ENCODE measurements at regions of chr1 and their contacts with region 1.

Region 1: DNA sequence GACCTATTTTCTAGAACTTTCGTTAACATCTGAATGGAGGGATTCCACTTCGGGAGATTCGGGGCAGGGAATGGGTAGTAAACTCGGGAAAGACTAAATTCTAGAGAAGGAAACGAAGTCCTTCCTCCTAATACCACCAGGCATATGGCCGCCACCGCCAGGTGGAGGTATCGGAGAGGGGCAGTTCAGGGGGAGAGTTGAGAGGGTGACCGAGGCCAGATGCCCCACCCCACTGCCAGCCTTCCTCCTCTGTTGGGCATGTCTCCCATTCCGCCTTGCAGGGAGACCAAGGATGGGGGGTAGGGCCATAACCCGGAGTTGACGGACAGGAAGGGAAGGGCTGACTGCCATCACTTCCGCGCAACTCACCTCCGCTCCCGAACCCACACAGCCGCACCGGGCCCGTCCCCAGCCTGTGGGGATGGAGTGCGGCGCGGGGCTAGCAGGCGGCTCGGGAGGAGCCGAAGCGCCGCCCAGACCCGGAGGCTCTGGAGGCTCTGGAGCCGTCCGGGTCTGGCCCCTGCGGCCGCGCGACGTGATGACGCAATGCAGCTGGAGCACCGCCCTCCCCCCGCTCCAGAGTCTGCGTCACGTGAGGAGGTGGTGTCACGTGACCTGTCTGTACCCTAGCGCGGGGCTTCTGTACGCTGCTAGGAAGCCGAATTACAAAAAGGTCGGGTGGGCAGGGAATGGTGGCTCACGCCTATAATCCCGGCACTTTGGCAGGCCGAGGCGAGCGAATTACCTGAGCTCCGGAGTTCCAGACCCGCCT is at the start of gene KLHL12:
- DNase-seq: peak; percentile 99
- H3K4me3 Mint-ChIP-seq: peak within 1 kb of the TSS; percentile 93
- H3K27ac Mint-ChIP-seq: peak within 1 kb of the TSS; percentile 97
- H3K4me1 Mint-ChIP-seq: no peaks in the 10 kb centered on the region
- H3K27me3 Mint-ChIP-seq: no peaks in the 10 kb centered on the region
- CTCF ChIP-seq: peak; percentile 87
- total RNA-seq, gene KLHL12: 35.4 and 36.7 TPM in 2 replicates

Region 2: DNA sequence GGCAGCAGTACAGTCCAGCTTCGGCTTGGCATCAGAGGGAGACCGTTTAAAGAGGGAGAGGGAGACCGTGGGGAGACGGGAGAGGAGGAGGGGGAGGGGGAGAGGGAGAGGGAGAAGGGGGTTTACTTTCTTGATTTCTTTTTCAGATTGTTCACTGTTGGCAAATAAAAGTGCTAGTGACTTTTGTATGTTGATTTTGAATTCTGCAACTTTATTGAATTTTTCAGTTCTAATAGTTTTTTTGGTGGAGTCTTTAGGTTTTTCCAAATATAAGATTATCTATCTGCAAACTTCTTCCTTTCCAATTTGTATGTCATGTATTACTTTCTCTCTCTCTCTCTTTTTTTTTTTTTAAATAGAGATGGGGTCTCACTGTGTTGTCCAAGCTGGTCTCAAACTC is 474.4 kb before region 1 on chr1:
- CTCF ChIA-PET with region 1: interaction called, 11 read pairs
- intact Hi-C with region 1: no loop called
- DNase-seq: no peak
- H3K4me3 Mint-ChIP-seq: no peak overlapping the region
- H3K27ac Mint-ChIP-seq: no peak overlapping the region
- H3K4me1 Mint-ChIP-seq: peaks cover 38% of the 10 kb centered on the region
- H3K27me3 Mint-ChIP-seq: no peaks in the 10 kb centered on the region
- CTCF ChIP-seq: no peak

Region 3: DNA sequence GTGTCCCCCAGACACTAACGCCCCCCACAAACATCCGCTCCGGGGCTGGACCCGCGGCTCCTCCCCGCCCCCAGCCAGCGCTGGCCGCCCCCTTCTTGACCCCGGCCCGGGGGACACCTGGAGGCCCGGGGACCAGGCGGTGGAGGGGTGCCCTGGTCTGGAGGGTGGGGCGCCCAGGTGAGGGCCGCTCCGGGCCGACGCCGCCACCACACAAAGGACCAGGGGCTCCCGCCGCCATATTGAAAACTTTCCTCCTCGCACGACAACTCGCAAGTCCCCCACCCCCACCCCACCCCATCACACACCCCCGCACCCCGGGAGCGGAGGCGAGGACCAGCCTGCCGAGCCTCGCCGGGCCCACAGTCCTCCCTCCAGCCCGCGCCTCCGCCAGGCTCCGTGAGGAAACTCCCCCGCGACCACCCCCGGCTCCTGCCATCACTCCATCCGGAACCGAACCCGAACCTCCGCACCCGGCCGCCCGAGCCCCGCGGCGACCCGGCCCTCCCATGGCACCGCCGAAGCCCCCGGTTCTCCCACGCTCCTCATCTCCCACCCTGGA is 119.5 kb before region 1 on chr1:
- CTCF ChIA-PET with region 1: no interaction called
- intact Hi-C with region 1: no loop called
- DNase-seq: peak; percentile 59
- H3K4me3 Mint-ChIP-seq: peak overlapping the region; percentile 82
- H3K27ac Mint-ChIP-seq: peak overlapping the region; percentile 80
- H3K4me1 Mint-ChIP-seq: peaks cover 55% of the 10 kb centered on the region
- H3K27me3 Mint-ChIP-seq: no peaks in the 10 kb centered on the region
- CTCF ChIP-seq: no peak

Region 4: DNA sequence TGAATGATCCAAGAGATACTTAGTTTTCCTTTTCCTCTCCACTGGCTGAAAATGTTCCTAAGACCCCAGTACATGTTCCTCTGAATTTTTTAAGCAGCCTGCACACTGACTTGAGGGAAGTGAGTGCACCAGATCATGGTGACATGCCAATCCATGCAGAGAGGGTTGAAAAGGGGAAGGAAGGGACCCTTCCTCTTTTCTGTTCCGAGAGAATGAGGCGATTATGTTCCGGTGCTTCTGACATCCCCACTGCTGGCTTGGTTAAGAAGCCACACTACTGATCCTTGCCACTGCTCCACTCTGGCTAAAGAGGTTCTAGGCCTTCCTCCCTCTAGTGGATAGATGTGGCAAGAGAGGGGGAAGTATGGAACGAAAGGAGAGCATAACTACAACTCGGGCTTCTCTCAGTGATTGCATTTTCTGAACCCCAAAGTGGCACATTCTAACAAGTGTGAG is 42.0 kb after region 1 on chr1:
- CTCF ChIA-PET with region 1: interaction called, 10 read pairs
- intact Hi-C with region 1: loop called (anchors 2 kb)
- DNase-seq: peak; percentile 68
- H3K4me3 Mint-ChIP-seq: no peak overlapping the region
- H3K27ac Mint-ChIP-seq: no peak overlapping the region
- H3K4me1 Mint-ChIP-seq: peaks cover 14% of the 10 kb centered on the region
- H3K27me3 Mint-ChIP-seq: peaks cover 28% of the 10 kb centered on the region
- CTCF ChIP-seq: peak; percentile 63

Region 5: GRCh38 chr1:202998836-202999750 is 72.2 kb after region 1 on chr1:
- CTCF ChIA-PET with region 1: interaction called, 5 read pairs
- intact Hi-C with region 1: loop called (anchors 2 kb)
- DNase-seq: peak; percentile 71
- H3K4me3 Mint-ChIP-seq: no peak overlapping the region
- H3K27ac Mint-ChIP-seq: no peak overlapping the region
- H3K4me1 Mint-ChIP-seq: peaks cover 18% of the 10 kb centered on the region
- H3K27me3 Mint-ChIP-seq: peaks cover 60% of the 10 kb centered on the region
- CTCF ChIP-seq: peak; percentile 77